ENCODE measurements at regions of chr4 and their contacts with region 1.

Region 1: GRCh38 chr4:185534866-185535611 is at the start of gene PDLIM3:
- DNase-seq: peak; percentile 80
- ATAC-seq: peak; percentile 89
- total RNA-seq, gene PDLIM3: 281 TPM

Region 2: GRCh38 chr4:185566972-185567371 is 31.9 kb after region 1 on chr4:
- intact Hi-C with region 1: loop called (anchors 2 kb)
- DNase-seq: no peak
- ATAC-seq: peak; percentile 85

Region 3: GRCh38 chr4:185580701-185581100 is 45.7 kb after region 1 on chr4:
- intact Hi-C with region 1: loop called (anchors 5 kb)
- DNase-seq: no peak
- ATAC-seq: no peak

Region 4: GRCh38 chr4:185597532-185598188 is 62.6 kb after region 1 on chr4:
- intact Hi-C with region 1: loop called (anchors 5 kb)
- DNase-seq: peak; percentile 80
- ATAC-seq: peak; percentile 56